ENCODE measurements at regions of chr1 and their contacts with region 1.

Region 1: DNA sequence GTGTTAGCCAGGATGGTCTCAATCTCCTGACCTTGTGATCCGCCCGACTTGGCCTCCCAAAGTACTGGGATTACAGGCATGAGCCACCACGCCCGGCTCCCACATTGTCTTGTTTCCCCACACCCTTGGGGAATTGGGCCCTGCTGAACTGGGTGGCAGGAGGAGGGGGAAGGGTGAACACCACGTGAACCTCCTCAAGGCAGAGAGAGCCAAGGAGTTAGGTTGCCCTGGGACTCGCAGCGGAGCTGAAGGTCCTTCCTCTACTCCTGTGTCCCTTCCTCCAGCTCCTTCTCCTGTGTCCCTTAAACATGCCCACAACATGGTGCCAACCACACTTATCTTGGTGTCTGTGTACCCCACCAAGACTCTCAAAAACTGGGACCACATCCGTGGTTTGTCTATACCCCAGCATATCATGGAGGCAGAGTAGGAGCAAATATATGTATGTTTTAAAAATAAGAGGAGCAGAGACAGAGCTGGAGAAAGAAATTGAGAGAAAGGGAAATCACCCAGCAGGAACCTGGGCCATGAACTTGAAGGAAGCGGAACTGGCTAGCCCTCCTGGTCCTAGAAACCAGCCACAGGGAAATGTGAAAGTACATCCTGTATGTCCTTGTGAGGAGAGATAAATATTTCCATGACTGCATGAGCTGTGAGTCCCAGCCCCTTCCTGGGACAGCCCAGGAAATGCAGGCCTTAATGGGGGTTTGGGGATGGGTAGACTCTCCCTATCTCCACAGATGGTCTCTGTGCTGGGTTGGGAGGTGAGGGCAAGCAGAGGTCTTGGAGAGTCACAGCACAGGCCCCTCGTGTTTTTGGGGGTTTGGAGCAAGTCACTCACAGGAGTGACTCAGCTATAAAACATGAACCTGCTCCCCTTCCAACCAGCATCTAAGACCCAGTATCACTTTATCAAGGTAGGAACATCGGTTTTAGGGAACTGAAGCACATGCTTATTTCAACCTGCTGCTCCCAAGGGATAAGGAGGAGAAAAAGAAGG is 9.4 kb upstream of the TAL1 start:
- DNase-seq: peak; percentile 58 to 78 (median 66)
- ATAC-seq: peak; percentile 40
- H3K4me3 ChIP-seq: no peak overlapping the region
- H3K27ac ChIP-seq: peak overlapping the region; percentile 78
- H3K4me1 ChIP-seq: peaks cover 45 to 65% of the 10 kb centered on the region in 2 experiments
- H3K27me3 ChIP-seq: no peaks in the 10 kb centered on the region
- CTCF ChIP-seq: no peak
- EP300 ChIP-seq: 0 out of 2 replicates have a peak, but pooled peaks have one; percentile 34
- POLR2A ChIP-seq: peak; percentile 49; the same call in 1 of the 2 replicates
- RAD21 ChIP-seq: no peak

Region 2: GRCh38 chr1:47257224-47257623 is 15.8 kb after region 1 on chr1:
- CTCF ChIA-PET with region 1: no interaction called
- POLR2A ChIA-PET with region 1: interaction called, 14 read pairs
- in situ Hi-C with region 1: no loop called
- intact Hi-C with region 1: no loop called
- DNase-seq: no peak
- ATAC-seq: 0 out of 3 replicates have a peak, but pooled peaks have one; percentile 20
- H3K4me3 ChIP-seq: no peak overlapping the region
- H3K27ac ChIP-seq: no peak overlapping the region
- H3K4me1 ChIP-seq: no peaks in the 10 kb centered on the region
- H3K27me3 ChIP-seq: no peaks in the 10 kb centered on the region
- CTCF ChIP-seq: no peak
- EP300 ChIP-seq: no peak
- POLR2A ChIP-seq: no peak
- RAD21 ChIP-seq: no peak

Region 3: GRCh38 chr1:47388891-47389238 is 147.5 kb after region 1 on chr1:
- CTCF ChIA-PET with region 1: no interaction called
- POLR2A ChIA-PET with region 1: no interaction called
- in situ Hi-C with region 1: no loop called
- intact Hi-C with region 1: no loop called
- DNase-seq: peak; percentile 78 to 82 (median 80)
- ATAC-seq: peak; percentile 93
- H3K4me3 ChIP-seq: no peak overlapping the region
- H3K27ac ChIP-seq: no peak overlapping the region
- H3K4me1 ChIP-seq: no peaks in the 10 kb centered on the region; a peak in 1 of 5 replicates
- H3K27me3 ChIP-seq: peaks cover 7 to 8% of the 10 kb centered on the region in 2 experiments; a peak in 4 of 5 replicates
- CTCF ChIP-seq: peak; percentile 92 to 96 (median 94)
- EP300 ChIP-seq: no peak
- POLR2A ChIP-seq: no peak
- RAD21 ChIP-seq: peak; percentile 62 to 90

Measured in K562 (cell line).